Spleen (tissue), 13 donors: ENCODE measurements at regions of chr18 and their contacts with region 1.

Region 1: DNA sequence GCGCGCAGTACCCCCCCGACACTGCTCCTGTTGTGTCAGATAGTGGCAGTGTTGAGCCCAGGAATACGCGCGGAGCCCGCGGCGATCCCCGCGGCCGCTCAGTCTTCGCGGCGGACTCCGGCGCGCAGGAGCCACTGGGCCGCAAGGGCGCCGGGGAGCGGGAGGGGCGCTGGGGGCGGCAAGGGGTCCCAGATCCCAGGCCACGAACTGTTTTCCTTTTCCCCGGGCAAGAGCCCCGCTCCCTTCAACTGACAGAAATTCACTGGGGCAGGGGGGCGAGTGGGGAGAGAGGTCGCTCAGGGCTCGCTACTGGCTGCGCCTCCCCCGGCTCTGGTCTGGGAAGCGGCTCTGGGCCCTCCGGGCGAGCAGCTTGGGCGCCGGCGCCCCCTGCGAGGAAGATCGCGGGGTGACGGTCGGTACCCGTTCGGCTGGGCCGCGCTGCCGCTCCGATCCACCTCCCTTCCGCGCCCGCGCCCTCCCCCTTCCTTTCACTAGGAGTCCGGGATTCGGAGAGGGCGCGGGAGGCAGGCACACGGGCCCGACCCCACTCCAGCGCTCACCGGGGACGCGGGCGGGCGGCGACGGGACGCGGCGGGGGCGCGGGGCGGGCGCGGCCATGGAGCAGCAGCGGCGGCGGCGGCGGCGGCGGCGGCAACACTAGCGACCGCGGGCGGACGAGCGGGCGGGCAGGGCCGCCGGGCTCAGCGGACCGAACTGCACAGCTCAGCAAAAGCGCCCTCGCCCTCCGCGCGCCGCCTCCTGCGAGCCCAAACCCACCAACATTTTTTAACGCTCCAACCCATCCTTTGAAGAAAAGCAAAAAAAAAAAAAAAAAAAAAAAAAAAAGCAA is 1.4 kb upstream of the SETBP1 start:
- DNase-seq: peak; percentile 95
- H3K4me3 ChIP-seq: peak overlapping the region; percentile 62 to 94 (median 72)
- H3K27ac ChIP-seq: peak overlapping the region; percentile 93 to 98 (median 96)
- H3K4me1 ChIP-seq: peaks cover 6 to 55% (median 42%) of the 10 kb centered on the region in 6 donors
- H3K27me3 ChIP-seq: peaks cover 0 to 33% (median 3%) of the 10 kb centered on the region in 7 donors
- CTCF ChIP-seq: peak; percentile 50 to 83 (median 71)
- POLR2A ChIP-seq: peak in 1 of 3 donors; percentile 76

Region 2: DNA sequence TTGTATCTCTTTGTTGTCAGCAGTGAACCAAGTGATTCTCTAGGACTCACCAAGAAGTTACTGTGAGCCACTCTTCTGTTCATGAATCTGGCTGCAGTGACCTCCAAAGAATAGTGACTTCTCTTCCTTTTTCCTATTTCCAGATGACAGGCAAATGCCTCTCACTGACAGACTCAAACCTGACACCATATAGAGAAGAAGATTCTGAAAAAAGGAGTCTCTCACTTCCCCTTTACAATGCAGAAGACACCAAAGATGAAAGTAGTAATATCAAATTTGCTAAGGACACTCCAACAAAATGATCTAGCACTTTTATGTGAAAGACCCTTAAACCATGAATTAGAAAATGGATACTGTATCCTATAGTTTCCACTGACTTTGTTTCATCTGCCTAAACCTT is 43.0 kb before region 1 on chr18:
- intact Hi-C with region 1: no loop called
- DNase-seq: no peak
- H3K4me3 ChIP-seq: no peak overlapping the region
- H3K27ac ChIP-seq: no peak overlapping the region
- H3K4me1 ChIP-seq: peaks cover 0 to 8% (median 0%) of the 10 kb centered on the region in 6 donors
- H3K27me3 ChIP-seq: no peaks in the 10 kb centered on the region
- CTCF ChIP-seq: no peak
- POLR2A ChIP-seq: no peak

Region 3: DNA sequence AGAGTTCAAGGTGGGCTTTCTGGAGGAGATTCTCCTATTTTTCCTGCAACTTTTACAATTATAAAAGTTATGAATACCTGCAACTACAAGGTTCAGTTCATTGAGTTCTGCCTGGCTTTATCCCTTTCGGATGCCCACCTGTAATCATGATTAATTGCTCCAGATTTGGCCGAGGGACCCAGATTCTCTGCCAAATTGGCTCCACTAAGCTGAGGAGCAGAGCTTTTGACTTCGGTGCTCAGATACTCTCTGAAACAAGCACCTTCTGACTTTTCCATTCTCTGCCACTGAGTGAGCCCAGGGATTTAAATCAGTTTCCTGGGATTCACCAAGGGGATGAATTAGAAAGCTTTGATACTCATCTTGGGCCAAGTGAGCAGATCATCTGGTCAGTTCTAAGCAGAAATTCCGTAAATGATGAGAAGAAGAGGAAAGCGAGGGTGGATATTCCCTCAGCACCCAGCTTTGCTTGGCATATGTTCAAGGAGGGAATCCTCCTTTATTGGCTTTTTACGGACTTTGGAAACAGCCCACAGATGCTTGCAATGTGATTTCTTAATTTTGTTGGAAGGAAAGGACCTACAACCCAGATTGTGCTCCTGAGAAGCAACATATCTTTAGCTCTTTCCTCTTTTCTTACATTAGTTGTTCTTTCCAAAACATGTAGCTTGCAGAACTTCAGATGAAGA is 180.6 kb after region 1 on chr18:
- intact Hi-C with region 1: loop called (anchors 10 kb)
- DNase-seq: no peak
- H3K4me3 ChIP-seq: no peak overlapping the region
- H3K27ac ChIP-seq: no peak overlapping the region
- H3K4me1 ChIP-seq: peaks cover 0 to 13% (median 6%) of the 10 kb centered on the region in 6 donors
- H3K27me3 ChIP-seq: no peaks in the 10 kb centered on the region
- CTCF ChIP-seq: no peak
- POLR2A ChIP-seq: no peak

Region 4: GRCh38 chr18:45212181-45213039 is 533.1 kb after region 1 on chr18:
- intact Hi-C with region 1: loop called (anchors 10 kb)
- DNase-seq: peak; percentile 88
- H3K4me3 ChIP-seq: no peak overlapping the region
- H3K27ac ChIP-seq: no peak overlapping the region
- H3K4me1 ChIP-seq: peaks cover 0 to 4% (median 2%) of the 10 kb centered on the region in 6 donors
- H3K27me3 ChIP-seq: no peaks in the 10 kb centered on the region
- CTCF ChIP-seq: peak; percentile 78 to 95 (median 91)
- POLR2A ChIP-seq: no peak